Breast epithelium (tissue), 4 donors: ENCODE measurements at regions of chr14 and their contacts with region 1.

Region 1: GRCh38 chr14:36996133-36996856 is 176.1 kb downstream of the SLC25A21 start:
- DNase-seq: no peak
- H3K4me3 ChIP-seq: no peak overlapping the region
- H3K27ac ChIP-seq: no peak overlapping the region
- H3K4me1 ChIP-seq: no peaks in the 10 kb centered on the region
- H3K27me3 ChIP-seq: no peaks in the 10 kb centered on the region
- CTCF ChIP-seq: no peak
- POLR2A ChIP-seq: no peak

Region 2: GRCh38 chr14:36928432-36928831 is 67.9 kb before region 1 on chr14:
- intact Hi-C with region 1: loop called (anchors 2 kb)
- DNase-seq: no peak
- H3K4me3 ChIP-seq: no peak overlapping the region
- H3K27ac ChIP-seq: no peak overlapping the region
- H3K4me1 ChIP-seq: no peaks in the 10 kb centered on the region
- H3K27me3 ChIP-seq: no peaks in the 10 kb centered on the region
- CTCF ChIP-seq: no peak
- POLR2A ChIP-seq: no peak